ENCODE measurements at regions of chr3 and their contacts with region 1.

Region 1: DNA sequence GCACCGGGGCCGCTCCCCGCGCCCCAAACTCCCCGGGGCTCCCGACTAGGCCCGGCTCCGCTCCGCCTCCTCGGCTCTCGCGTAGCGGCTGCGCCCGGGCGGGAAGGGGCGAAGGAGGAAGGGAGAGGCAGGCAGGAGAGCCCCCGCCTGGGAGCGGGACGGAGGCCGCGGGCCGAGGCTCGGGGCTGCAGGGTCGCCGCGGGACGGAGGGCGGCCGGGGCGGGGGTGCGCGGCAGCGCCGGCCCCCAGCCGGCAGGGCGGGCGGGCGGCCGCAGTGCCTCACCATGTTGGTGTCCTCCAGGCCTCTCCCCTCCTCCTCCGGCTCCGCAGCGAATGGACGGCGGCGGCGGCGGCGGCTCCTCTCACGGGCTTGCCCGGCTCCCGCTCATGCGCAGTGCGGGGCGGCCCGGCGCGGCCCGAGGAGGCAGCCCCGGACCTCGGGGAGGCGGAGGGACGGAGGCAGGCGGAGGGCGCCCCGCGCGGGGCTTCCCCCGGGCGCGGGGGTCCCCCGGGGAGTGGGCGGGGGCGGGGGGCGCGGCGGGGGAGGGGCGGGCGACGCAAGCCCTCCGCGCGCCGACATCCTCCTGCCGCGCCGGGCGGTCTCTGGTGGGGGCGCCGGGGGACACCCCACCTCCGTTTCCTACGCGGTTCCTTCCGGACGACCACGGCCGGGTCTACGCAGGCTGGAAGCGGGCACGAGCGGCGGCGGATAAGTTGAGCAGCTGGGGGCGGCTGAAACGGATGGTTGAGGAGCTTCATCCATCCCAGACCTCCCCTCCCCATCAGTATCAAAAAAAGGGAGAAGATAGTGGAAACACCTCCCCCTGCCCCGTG is at the start of gene DCUN1D1:
- DNase-seq: peak; percentile 93 to 96
- ATAC-seq: peak; percentile 91 to 97 (median 94)
- H3K4me3 ChIP-seq: peak within 1 kb of the TSS; percentile 95
- H3K27ac ChIP-seq: peak within 1 kb of the TSS; percentile 89
- H3K4me1 ChIP-seq: peaks cover 20% of the 10 kb centered on the region
- H3K27me3 ChIP-seq: no peaks in the 10 kb centered on the region
- CTCF ChIP-seq: no peak
- total RNA-seq, gene DCUN1D1: 41.5 to 97.8 (median 50.7) TPM

Region 2: DNA sequence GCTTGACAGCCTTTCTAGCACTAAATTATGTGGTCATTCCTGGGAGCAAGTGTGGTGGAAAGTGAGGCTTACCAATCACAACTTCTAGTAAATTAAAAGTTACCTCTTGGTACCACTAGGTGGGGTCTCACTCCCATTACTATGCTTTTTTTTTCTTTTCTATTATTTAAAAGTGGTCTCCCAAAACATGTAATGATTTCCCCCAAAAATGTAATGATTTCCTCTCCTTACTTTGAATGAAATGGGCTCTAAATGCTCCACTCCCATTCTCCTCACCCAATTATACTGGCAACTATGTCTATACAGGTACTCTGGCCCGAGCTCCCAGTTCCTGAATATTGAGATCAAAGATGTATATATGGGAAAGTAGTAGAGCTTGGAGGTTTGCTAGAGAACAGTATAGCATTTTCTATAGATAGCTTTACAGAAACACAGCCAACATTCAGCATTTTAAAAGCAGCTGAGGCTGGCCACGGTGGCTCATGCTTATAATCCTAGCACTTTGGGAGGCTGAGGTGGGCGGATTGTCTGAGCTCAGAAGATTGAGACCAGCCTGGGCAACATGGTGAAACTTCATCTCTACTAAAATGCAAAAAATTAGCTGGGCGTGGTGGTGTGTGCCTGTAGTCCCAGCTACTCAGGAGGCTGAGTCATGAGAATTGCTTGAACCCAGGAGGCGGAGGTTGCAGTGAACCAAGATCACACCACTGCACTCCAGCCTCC is 70.9 kb before region 1 on chr3:
- intact Hi-C with region 1: loop called (anchors 5 kb)
- DNase-seq: no peak
- ATAC-seq: peak; percentile 26 to 66 (median 50)
- H3K4me3 ChIP-seq: no peak overlapping the region
- H3K27ac ChIP-seq: no peak overlapping the region
- H3K4me1 ChIP-seq: no peaks in the 10 kb centered on the region
- H3K27me3 ChIP-seq: no peaks in the 10 kb centered on the region
- CTCF ChIP-seq: peak; percentile 61

Region 3: DNA sequence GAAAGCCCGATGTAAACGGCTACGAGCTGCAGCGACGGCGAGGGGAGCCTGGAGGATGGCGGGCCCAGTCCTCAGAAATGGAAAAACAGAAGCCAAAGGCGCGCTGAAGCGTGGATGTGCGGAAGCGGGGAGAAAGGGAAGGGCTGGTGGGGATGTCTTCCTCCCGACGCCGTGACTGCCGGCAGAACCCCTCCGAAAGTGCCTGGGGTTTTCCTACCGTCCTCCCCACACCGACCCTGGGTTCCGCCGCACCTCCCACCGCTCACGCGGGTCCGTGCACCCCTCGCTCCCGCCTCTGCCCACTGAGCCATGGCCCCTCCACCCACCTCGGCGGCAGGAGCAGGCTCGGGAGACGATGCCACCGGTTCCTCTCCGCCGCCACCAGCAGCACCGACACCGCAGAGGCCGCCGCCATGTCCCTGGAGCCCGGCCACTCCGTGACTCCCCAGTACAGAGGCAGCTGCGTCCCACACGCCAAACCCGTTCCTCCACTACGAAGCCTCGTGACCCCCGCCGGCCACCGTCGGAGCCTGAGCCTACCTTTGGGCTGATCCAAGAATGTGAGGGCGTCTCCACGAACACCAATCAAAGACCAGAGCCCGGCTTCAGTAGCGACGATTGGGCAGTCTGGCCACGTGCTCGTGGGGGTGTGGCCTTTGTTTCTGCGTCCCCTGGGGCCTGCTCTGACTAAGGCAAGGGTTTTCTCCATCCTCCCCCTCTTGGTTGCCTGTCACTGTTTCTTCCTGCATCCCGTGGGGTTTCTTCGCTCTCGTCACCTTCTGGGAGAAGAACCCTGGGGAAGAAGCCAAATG is 118.8 kb after region 1 on chr3 and contains the start of gene MCCC1:
- intact Hi-C with region 1: loop called in 1 of 2 experiments (anchors 5 kb)
- DNase-seq: peak; percentile 99
- ATAC-seq: peak; percentile 98 to 100 (median 100)
- H3K4me3 ChIP-seq: peak within 1 kb of the TSS; percentile 93
- H3K27ac ChIP-seq: peak within 1 kb of the TSS; percentile 89
- H3K4me1 ChIP-seq: peaks cover 12% of the 10 kb centered on the region
- H3K27me3 ChIP-seq: no peaks in the 10 kb centered on the region
- CTCF ChIP-seq: no peak
- total RNA-seq, gene MCCC1: 15.6 to 24.4 (median 16.0) TPM

Measured in psoas muscle (tissue), 8 donors.